ENCODE measurements at regions of chr3 and their contacts with region 1.

Region 1: DNA sequence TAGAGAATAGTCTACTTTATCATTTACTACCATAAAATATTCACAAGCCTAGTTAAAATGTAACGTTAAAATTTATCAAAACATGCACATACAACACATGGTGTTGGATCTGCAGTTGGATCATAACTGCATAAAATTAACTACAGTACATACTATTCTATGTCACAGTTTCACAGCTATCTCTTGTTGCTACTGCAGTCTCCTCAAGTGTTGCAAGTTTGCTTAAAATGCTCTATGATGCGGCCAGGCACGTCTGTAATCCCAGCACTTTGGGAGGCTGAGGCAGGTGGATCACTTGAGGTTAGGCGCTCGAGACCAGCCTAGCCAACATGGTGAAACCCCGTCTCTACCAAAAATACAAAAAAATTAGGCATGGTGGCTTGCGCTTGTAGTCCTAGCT is 10.3 kb downstream of the PPP1R2 start:
- DNase-seq: no peak
- ATAC-seq: no peak
- H3K4me3 ChIP-seq: no peak overlapping the region
- H3K4me3 Mint-ChIP-seq: peak overlapping the region in 9 of 10 donors; percentile 10 to 98 (median 68)
- H3K27ac ChIP-seq: peak overlapping the region; percentile 56
- H3K27ac Mint-ChIP-seq: peak overlapping the region in 8 of 9 donors; percentile 21 to 91 (median 62)
- H3K4me1 ChIP-seq: peaks cover 53 to 60% of the 10 kb centered on the region in 2 donors
- H3K4me1 Mint-ChIP-seq: peaks cover 44 to 98% (median 90%) of the 10 kb centered on the region in 7 donors
- H3K27me3 ChIP-seq: no peaks in the 10 kb centered on the region
- H3K27me3 Mint-ChIP-seq: no peaks in the 10 kb centered on the region

Region 2: DNA sequence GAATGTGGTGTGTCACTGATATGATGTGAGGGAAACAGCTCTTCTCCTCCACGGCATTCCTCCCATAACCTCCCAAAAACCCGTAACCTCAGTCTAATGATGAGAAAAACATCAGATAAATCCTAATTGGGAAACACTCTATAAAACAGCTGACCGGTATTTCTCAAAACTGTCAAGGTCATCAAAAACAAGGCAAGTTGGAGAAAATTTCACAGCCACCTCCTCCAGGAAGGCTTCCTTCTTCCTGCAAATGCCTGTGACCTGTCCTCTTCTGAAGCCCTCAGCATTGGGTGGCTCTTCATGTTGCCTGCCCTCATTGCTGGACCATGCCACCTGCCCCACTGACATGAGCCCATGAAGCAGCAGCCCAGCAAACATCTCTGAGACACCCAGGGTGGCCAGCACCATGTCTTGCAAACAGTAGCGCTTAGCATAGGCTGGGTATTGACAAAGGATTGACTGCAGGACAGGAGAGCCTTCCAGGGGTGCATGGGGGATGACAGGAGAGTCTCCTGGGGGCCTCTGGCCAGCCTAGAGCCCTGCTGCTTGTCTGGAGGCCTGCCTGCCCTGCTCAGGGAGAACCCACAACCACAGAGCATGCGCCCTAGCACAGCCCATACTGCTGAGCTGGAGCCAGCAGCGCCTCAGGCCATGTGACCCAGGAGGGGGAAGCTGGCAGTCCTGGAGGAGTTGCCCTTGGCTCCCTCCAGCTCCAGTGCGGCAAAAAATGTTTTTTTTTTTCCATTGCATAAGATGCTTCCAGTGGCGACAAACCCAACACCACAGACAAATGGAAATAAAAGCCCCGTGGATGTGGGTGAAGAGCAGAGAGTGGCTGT is 311.6 kb before region 1 on chr3:
- CTCF ChIA-PET with region 1: no interaction called
- POLR2A ChIA-PET with region 1: no interaction called
- intact Hi-C with region 1: no loop called
- DNase-seq: peak in 1 of 9 donors; percentile 3
- ATAC-seq: no peak
- H3K4me3 ChIP-seq: no peak overlapping the region
- H3K4me3 Mint-ChIP-seq: no peak overlapping the region
- H3K27ac ChIP-seq: no peak overlapping the region
- H3K27ac Mint-ChIP-seq: peak overlapping the region in 1 of 9 donors; percentile 62
- H3K4me1 ChIP-seq: no peaks in the 10 kb centered on the region
- H3K4me1 Mint-ChIP-seq: peaks cover 0 to 3% (median 0%) of the 10 kb centered on the region in 7 donors
- H3K27me3 ChIP-seq: no peaks in the 10 kb centered on the region
- H3K27me3 Mint-ChIP-seq: no peaks in the 10 kb centered on the region

Region 3: DNA sequence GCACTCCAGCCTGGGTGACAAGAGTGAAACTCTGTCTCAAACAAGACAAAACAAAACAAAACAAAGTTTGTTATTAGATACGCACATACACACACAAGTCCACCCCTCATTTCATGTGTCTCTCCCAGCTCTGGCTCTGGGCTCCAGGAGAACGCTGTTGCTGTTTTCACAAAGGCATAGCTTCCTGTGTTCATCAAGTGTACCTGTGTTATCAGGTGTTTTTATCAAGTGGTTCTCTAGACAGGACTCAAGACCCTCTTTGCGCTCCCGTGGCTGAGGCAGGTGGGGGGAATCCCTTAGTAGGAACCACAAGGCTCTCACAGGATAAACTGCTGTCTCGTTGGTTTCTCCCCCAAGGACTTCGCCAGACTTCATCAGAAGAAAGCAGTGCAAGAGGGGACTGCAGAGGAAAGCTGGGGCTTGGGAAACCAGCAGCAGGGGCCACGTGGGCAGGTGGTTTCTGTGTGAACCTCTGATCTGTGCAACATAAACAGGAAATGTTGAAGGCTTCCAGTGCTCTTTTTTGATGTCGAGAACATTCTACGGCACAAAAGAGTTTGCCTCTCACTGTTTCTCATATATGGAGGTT is 17.2 kb after region 1 on chr3:
- CTCF ChIA-PET with region 1: interaction called, 11 read pairs
- POLR2A ChIA-PET with region 1: interaction called, 224 read pairs
- intact Hi-C with region 1: no loop called
- DNase-seq: peak; percentile 45 to 95 (median 94)
- ATAC-seq: peak; percentile 89
- H3K4me3 ChIP-seq: peak overlapping the region; percentile 43
- H3K4me3 Mint-ChIP-seq: peak overlapping the region; percentile 73 to 98 (median 90)
- H3K27ac ChIP-seq: peak overlapping the region; percentile 69
- H3K27ac Mint-ChIP-seq: peak overlapping the region; percentile 91 to 100 (median 99)
- H3K4me1 ChIP-seq: peaks cover 70 to 72% of the 10 kb centered on the region in 2 donors
- H3K4me1 Mint-ChIP-seq: peaks cover 44 to 93% (median 86%) of the 10 kb centered on the region in 7 donors
- H3K27me3 ChIP-seq: no peaks in the 10 kb centered on the region
- H3K27me3 Mint-ChIP-seq: no peaks in the 10 kb centered on the region

Region 4: DNA sequence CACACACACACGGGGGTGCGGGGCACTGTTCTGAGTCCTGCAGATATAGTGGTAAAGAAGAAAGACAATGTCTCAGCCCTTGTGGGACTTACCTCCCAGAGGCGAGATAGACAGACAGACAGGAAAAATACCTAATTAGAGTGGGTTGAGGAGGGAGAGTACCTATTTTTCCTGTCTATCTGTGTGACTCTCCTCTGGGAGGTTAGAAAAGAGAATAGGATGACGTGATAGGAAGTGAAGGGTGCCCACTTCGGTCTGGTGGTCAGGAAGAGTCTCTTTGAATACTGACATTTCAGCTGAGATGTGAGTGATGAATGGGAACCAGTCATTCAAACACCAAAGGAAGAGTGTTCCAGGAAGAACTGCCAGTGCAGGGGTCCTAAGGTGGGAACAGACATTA is 55.0 kb after region 1 on chr3:
- CTCF ChIA-PET with region 1: no interaction called
- POLR2A ChIA-PET with region 1: no interaction called
- intact Hi-C with region 1: no loop called
- DNase-seq: no peak
- ATAC-seq: no peak
- H3K4me3 ChIP-seq: no peak overlapping the region
- H3K4me3 Mint-ChIP-seq: no peak overlapping the region
- H3K27ac ChIP-seq: no peak overlapping the region
- H3K27ac Mint-ChIP-seq: no peak overlapping the region
- H3K4me1 ChIP-seq: peaks cover 7% of the 10 kb centered on the region in 2 donors
- H3K4me1 Mint-ChIP-seq: peaks cover 0 to 12% (median 5%) of the 10 kb centered on the region in 7 donors
- H3K27me3 ChIP-seq: no peaks in the 10 kb centered on the region
- H3K27me3 Mint-ChIP-seq: peaks cover 0 to 13% (median 0%) of the 10 kb centered on the region in 5 donors

Region 5: GRCh38 chr3:195777975-195778925 is 245.4 kb after region 1 on chr3:
- CTCF ChIA-PET with region 1: no interaction called
- POLR2A ChIA-PET with region 1: no interaction called
- intact Hi-C with region 1: no loop called
- DNase-seq: no peak
- ATAC-seq: no peak
- H3K4me3 ChIP-seq: no peak overlapping the region
- H3K4me3 Mint-ChIP-seq: peak overlapping the region in 6 of 10 donors; percentile 21 to 73 (median 58)
- H3K27ac ChIP-seq: no peak overlapping the region
- H3K27ac Mint-ChIP-seq: peak overlapping the region in 8 of 9 donors; percentile 54 to 92 (median 86)
- H3K4me1 ChIP-seq: no peaks in the 10 kb centered on the region
- H3K4me1 Mint-ChIP-seq: peaks cover 27 to 48% (median 46%) of the 10 kb centered on the region in 7 donors
- H3K27me3 ChIP-seq: no peaks in the 10 kb centered on the region
- H3K27me3 Mint-ChIP-seq: no peaks in the 10 kb centered on the region

Measured in naive thymus-derived CD4-positive, alpha-beta T cell (primary cell).